H1 (cell line): ENCODE measurements at regions of chr13 and their contacts with region 1.

Region 1: DNA sequence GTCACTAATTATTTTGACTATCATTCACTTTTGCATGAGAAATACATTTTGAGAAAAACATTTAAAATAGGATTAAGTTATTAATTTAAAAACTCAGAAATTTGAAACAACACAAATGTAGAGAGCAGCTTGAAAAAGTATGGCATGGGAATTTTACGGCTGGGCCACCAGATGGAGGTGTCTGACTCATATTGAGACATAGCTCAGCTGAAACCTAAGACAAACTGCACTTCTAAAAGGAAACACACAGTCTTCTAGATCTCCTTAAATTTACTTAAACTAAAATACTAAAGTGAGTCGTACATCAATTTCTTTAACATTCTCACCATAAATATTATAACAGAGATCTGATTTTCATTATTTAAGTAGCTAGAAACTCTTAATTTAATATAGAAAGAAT is 41.9 kb upstream of the POSTN start:
- DNase-seq: no peak
- H3K4me3 ChIP-seq: no peak overlapping the region
- H3K27ac ChIP-seq: no peak overlapping the region
- H3K4me1 ChIP-seq: no peaks in the 10 kb centered on the region; a peak in 1 of 7 replicates
- H3K27me3 ChIP-seq: peaks cover 0 to 1% (median 0%) of the 10 kb centered on the region in 4 experiments; a peak in 1 of 7 replicates
- CTCF ChIP-seq: peak in 2 of 3 experiments; percentile 27 to 43; a peak in 2 of 4 replicates
- EP300 ChIP-seq: no peak
- POLR2A ChIP-seq: no peak
- RAD21 ChIP-seq: peak; percentile 61 to 72

Region 2: DNA sequence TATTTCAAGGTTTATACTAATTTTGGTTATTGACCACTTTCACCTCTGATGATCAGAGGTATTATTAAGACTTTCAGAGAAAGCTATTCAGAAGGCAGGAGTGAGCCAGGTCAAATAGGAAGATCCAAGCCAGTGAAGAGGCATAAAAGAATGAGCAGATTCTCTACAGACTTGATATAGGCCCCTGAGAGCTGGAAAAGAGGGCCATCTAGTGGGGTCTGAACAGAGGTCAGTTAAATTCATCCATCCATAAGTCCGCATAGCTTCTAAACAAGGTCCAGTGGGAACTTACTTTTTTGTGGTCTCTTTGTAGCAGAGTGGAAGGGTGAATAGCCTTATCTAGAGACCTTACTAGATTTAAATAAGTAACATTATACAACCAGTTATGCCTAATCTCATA is 582.6 kb after region 1 on chr13:
- CTCF ChIA-PET with region 1: interaction called, 15 read pairs
- POLR2A ChIA-PET with region 1: no interaction called
- DNase-seq: peak in 1 of 2 experiments; percentile 17
- H3K4me3 ChIP-seq: no peak overlapping the region
- H3K27ac ChIP-seq: no peak overlapping the region
- H3K4me1 ChIP-seq: no peaks in the 10 kb centered on the region
- H3K27me3 ChIP-seq: no peaks in the 10 kb centered on the region
- CTCF ChIP-seq: peak in 2 of 3 experiments; percentile 76 to 78; a peak in 3 of 4 replicates
- EP300 ChIP-seq: no peak
- POLR2A ChIP-seq: no peak
- RAD21 ChIP-seq: peak; percentile 92 to 98